Body of pancreas (tissue), 4 donors: ENCODE measurements at regions of chr1 and their contacts with region 1.

Region 1: DNA sequence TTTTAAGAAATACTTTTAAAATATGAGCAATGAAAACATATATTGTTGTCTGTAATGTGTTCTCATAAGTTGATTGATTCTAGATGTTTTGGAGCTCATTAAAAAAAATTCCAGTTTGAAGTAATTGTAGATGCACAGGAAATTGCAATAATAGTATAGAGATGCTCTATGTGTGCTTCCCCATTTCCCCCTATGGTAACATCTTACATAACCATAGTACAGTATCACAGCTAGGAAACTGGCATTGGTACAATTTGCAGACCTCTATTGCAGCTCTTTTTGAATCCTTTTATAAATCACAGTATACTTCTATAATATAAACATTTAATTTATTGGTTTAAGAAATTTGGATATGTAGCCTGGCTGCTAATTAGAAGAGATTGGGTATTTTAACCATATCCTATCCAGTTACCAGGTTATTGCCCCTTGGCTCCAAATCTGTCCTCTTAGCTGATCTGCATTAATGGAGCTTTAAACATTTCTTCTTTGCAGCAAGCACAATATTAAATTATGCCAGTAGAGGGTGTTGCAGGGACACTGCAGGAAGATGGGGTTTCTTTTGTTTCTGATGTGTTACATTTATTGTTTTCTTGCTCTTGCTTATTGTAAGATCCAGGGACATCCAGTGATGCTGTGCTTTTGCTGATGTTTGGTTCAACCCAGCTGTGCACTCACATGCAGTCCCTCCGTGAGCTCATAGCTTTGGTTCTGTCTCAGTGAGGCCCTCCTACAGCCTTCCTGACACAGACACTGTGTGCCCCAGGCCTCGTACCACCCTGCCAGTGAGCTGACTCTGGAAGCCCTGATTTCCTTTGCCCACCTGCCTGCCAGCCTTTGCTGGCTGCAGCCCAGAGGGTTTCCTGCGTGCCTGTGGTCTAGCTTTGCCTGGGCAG is 103.3 kb downstream of the RABGAP1L start:
- DNase-seq: no peak
- ATAC-seq: no peak
- H3K4me3 ChIP-seq: no peak overlapping the region
- H3K27ac ChIP-seq: no peak overlapping the region
- H3K4me1 ChIP-seq: no peaks in the 10 kb centered on the region
- H3K27me3 ChIP-seq: no peaks in the 10 kb centered on the region
- CTCF ChIP-seq: peak; percentile 35 to 61 (median 50)
- POLR2A ChIP-seq: no peak

Region 2: DNA sequence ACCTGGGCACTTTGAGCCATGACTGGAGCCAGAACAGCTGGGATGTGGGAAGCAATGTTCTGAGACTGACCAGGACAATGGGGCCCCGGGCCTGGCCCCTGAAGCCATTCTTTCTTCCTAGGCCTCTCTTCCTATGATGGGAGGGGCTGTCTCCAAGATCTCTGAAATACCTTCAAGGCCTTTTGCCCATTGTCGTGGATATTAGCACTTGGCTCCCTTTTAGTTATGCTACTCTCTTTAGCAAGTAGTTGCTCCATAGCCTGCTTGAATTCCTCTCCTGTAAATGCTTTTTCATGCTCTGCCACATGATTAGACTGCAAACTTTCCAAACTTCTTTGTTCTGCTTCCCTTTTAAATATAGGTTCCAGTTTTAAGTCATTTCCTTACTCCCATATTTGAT is 474.2 kb after region 1 on chr1:
- intact Hi-C with region 1: loop called (anchors 10 kb)
- DNase-seq: no peak
- ATAC-seq: no peak
- H3K4me3 ChIP-seq: no peak overlapping the region
- H3K27ac ChIP-seq: no peak overlapping the region
- H3K4me1 ChIP-seq: no peaks in the 10 kb centered on the region
- H3K27me3 ChIP-seq: no peaks in the 10 kb centered on the region
- CTCF ChIP-seq: no peak
- POLR2A ChIP-seq: no peak